CD8-positive, alpha-beta memory T cell (primary cell): ENCODE measurements at regions of chr19 and their contacts with region 1.

Region 1: DNA sequence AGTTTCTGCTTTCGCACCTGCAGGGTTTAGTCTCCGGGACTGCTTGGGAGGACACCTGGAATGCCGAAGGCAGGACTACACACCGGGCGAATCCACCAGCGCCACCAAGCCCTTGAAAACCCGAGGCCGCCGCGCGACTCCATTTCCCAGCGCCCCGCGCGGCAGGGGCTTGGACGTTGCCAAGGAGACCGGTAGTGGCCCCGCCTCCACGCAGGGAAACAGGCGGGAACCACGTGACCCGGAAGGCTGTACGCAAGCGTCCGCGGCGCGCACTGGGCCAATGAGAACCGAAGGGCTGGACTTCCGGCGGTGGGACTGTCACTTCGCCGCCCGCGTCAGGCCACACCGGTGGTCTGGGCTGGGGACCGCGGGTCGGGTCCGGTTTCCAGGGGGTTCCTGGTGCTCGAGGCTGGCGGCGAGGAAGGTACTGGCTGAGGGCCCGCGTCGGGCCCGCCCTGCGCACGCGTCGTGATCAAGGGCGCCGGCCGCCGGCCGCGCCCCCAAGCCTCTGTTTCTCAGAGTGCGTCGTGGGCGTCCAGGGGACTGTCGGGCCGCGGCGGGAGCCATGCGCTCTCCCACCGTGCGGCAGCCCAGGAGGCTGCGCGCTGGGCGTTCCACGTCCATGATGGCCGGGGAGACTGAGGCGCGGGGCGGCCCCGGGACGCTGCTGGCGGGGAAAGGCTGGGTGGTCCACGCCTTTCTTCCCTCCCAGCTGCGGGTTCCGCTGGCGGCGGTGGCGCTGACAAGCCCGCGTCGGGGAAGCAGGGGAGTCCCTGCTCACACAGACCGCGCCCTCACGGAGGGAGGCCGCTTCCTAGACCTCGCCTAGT is at the start of gene ZNF324:
- DNase-seq: peak; percentile 94 to 98 (median 97)
- H3K4me3 ChIP-seq: peak within 1 kb of the TSS; percentile 81
- H3K4me3 Mint-ChIP-seq: peak within 1 kb of the TSS; percentile 84 to 94 (median 86)
- H3K27ac ChIP-seq: peak within 1 kb of the TSS; percentile 96
- H3K27ac Mint-ChIP-seq: peak within 1 kb of the TSS; percentile 73 to 96 (median 90)
- H3K4me1 ChIP-seq: peaks cover 13% of the 10 kb centered on the region
- H3K4me1 Mint-ChIP-seq: peaks cover 22 to 28% (median 25%) of the 10 kb centered on the region in 3 donors
- H3K27me3 ChIP-seq: no peaks in the 10 kb centered on the region
- H3K27me3 Mint-ChIP-seq: peaks cover 0 to 2% of the 10 kb centered on the region in 2 donors
- total RNA-seq, gene ZNF324: 19.8 to 21.0 TPM

Region 2: DNA sequence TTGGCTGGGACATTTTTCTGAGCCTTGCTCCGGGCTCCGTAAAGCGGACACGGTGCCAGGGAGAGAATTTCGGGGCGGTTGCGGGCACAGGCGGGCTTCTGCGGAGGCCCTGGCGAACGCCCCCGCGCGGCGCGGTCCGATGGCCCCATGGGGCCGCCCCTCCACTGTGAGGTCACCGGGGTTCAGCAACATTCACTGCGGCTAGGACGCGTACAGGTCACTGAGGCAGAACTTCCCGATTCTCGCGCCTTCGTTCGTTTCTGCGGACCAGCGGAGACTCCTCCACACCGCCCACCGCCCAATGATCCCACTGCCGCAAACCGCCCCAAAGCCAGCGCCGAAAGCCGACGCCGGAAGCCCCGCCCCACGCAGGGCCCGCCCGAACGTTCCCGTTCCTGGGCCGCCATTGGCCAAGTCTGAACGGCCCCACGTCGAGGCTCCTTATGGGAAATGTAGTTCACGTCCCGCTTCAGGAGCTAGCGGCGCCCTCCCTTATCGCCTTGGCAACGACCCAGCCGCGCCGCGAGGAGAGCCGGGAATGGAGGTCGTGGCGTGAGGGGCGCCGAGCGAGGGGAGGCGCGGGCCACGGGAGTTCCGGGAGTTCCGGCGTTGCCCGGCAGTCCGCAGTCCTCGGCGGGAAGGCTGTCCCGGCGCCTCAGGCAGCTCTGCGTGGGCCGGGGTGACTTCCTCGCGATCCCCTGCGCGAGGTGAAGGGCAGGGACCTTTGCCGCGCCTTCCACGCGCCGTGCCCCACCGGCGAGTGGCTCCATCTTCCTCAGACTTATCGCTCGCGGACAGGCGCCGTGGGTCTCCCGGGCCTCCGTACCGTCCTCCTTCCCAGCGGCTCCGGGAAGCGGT is 58.6 kb before region 1 on chr19 and contains the start of gene ZNF584:
- CTCF ChIA-PET with region 1: no interaction called
- POLR2A ChIA-PET with region 1: no interaction called
- DNase-seq: peak; percentile 90 to 95 (median 91)
- H3K4me3 ChIP-seq: peak within 1 kb of the TSS; percentile 94
- H3K4me3 Mint-ChIP-seq: peak within 1 kb of the TSS; percentile 94 to 97 (median 96)
- H3K27ac ChIP-seq: peak within 1 kb of the TSS; percentile 93
- H3K27ac Mint-ChIP-seq: peak within 1 kb of the TSS; percentile 94 to 98 (median 96)
- H3K4me1 ChIP-seq: peaks cover 18% of the 10 kb centered on the region
- H3K4me1 Mint-ChIP-seq: peaks cover 29 to 38% (median 35%) of the 10 kb centered on the region in 3 donors
- H3K27me3 ChIP-seq: no peaks in the 10 kb centered on the region
- H3K27me3 Mint-ChIP-seq: no peaks in the 10 kb centered on the region
- total RNA-seq, gene ZNF584: 20.9 to 22.6 TPM

Region 3: DNA sequence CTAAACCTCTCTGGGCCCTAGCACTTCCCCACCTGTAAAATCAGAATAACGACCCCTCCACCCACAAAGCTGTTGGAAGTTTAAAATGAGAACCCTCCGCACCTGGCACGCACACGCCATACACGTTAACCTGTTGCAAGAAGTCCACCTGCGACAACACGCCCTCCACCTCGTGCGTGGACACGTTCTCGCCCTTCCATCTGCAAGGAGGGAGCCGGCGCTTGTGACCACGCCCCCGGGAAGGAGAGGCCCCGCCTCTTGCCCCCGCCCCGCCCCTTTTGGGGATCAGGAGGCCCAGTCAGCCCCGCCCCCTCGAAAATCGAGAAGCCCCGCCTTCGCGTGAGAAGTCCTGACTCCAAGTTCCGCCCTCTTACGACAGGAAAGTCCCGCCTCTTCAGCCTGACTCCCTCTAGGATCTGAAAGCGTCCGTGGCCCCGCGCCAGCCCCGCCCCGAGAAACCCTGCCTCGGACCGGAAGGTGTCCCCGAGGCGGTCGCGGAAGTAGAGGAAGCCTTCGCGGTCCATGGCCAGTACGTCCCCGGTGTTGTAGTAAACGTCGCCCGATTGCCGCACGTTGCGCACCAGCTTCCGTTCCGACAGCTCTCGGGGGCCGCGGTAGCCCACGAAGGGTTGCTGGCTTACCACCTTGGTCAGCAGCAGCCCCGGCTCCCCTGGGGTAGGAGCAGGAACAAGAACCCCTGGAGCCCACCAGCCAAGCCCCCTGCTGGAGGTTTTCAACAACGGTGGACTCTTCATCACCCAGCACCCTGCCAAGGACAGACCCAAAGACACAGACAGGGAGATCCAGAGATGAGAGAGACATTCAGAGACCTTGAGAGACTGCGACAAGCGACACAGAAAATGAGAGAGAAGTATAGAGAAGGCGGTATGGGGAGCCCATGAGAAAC is 32.3 kb after region 1 on chr19:
- CTCF ChIA-PET with region 1: no interaction called
- POLR2A ChIA-PET with region 1: interaction called, 13 read pairs
- DNase-seq: peak; percentile 87 to 96 (median 91)
- H3K4me3 ChIP-seq: peak overlapping the region; percentile 83
- H3K4me3 Mint-ChIP-seq: peak overlapping the region; percentile 86 to 96 (median 90)
- H3K27ac ChIP-seq: peak overlapping the region; percentile 60
- H3K27ac Mint-ChIP-seq: peak overlapping the region; percentile 91 to 98 (median 97)
- H3K4me1 ChIP-seq: peaks cover 18% of the 10 kb centered on the region
- H3K4me1 Mint-ChIP-seq: peaks cover 25 to 32% (median 26%) of the 10 kb centered on the region in 3 donors
- H3K27me3 ChIP-seq: no peaks in the 10 kb centered on the region
- H3K27me3 Mint-ChIP-seq: peaks cover 0 to 4% of the 10 kb centered on the region in 2 donors